H1 (cell line): ENCODE measurements at regions of chr17 and their contacts with region 1.

Region 1: DNA sequence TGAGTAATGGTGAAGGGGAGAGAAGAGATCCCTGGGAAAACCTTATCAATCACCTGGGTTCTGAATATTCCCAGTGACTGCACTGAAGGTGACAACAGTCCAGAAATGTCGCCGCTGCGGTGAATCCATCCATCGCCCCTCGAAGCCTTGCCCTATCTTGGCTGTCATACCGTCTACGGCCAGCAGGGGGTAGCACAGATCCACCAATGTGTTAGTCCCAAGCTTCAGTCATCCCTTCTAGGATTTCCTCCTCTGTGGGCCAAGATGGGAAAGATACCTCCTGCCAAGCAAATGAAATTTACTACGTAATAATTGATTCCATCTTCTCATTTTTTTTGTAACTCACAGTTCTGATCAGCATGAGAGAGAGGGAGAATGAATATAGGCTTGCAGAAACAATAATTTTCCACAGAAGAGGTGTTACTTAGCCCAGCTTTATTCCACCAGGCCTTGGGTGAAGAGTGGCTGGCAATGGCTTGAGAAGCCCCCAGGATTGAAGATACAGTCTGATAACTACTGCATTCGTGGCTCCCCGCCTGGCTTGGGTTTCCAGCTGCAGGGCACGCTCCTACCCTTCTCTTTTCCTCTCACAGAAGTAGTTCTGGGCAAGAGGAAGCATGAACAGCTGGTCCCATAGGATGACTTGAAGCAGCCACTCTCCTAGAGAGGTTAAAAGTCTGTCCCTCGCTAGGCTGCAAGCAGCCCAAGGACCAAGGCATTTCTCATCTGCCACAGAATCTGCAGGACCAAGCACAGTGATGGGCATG is 2.6 kb upstream of the FMNL1 start:
- DNase-seq: peak in 1 of 2 experiments; percentile 99
- H3K4me3 ChIP-seq: no peak overlapping the region
- H3K27ac ChIP-seq: no peak overlapping the region
- H3K4me1 ChIP-seq: peaks cover 0 to 9% (median 3%) of the 10 kb centered on the region in 4 experiments; a peak in 3 of 7 replicates
- H3K27me3 ChIP-seq: peaks cover 15 to 42% (median 35%) of the 10 kb centered on the region in 4 experiments
- CTCF ChIP-seq: peak; percentile 94 to 97 (median 97)
- EP300 ChIP-seq: no peak
- POLR2A ChIP-seq: no peak
- RAD21 ChIP-seq: peak; percentile 96 to 97

Region 2: GRCh38 chr17:45123930-45124796 is 94.9 kb before region 1 on chr17:
- CTCF ChIA-PET with region 1: no interaction called
- POLR2A ChIA-PET with region 1: no interaction called
- DNase-seq: no peak
- H3K4me3 ChIP-seq: no peak overlapping the region
- H3K27ac ChIP-seq: no peak overlapping the region
- H3K4me1 ChIP-seq: peaks cover 0 to 18% (median 10%) of the 10 kb centered on the region in 4 experiments; a peak in 5 of 7 replicates
- H3K27me3 ChIP-seq: no peaks in the 10 kb centered on the region
- CTCF ChIP-seq: no peak
- EP300 ChIP-seq: no peak
- POLR2A ChIP-seq: no peak
- RAD21 ChIP-seq: no peak

Region 3: GRCh38 chr17:45135192-45135977 is 83.7 kb before region 1 on chr17 and contains the start of gene ACBD4:
- CTCF ChIA-PET with region 1: interaction called, 19 read pairs
- POLR2A ChIA-PET with region 1: no interaction called
- DNase-seq: peak; percentile 87 to 99
- H3K4me3 ChIP-seq: peak within 1 kb of the TSS; percentile 26 to 65 (median 58)
- H3K27ac ChIP-seq: no peak within 1 kb of the TSS
- H3K4me1 ChIP-seq: peaks cover 0 to 6% (median 2%) of the 10 kb centered on the region in 4 experiments; a peak in 3 of 7 replicates
- H3K27me3 ChIP-seq: no peaks in the 10 kb centered on the region
- CTCF ChIP-seq: peak; percentile 100
- EP300 ChIP-seq: peak in 1 of 2 experiments; percentile 41; a peak in 1 of 3 replicates
- POLR2A ChIP-seq: 0 out of 3 replicates have a peak, but pooled peaks of 1 of the 2 experiments have one; percentile 43
- RAD21 ChIP-seq: peak; percentile 94 to 95
- total RNA-seq, gene ACBD4: 9.3 and 10.7 TPM in 2 replicates

Region 4: DNA sequence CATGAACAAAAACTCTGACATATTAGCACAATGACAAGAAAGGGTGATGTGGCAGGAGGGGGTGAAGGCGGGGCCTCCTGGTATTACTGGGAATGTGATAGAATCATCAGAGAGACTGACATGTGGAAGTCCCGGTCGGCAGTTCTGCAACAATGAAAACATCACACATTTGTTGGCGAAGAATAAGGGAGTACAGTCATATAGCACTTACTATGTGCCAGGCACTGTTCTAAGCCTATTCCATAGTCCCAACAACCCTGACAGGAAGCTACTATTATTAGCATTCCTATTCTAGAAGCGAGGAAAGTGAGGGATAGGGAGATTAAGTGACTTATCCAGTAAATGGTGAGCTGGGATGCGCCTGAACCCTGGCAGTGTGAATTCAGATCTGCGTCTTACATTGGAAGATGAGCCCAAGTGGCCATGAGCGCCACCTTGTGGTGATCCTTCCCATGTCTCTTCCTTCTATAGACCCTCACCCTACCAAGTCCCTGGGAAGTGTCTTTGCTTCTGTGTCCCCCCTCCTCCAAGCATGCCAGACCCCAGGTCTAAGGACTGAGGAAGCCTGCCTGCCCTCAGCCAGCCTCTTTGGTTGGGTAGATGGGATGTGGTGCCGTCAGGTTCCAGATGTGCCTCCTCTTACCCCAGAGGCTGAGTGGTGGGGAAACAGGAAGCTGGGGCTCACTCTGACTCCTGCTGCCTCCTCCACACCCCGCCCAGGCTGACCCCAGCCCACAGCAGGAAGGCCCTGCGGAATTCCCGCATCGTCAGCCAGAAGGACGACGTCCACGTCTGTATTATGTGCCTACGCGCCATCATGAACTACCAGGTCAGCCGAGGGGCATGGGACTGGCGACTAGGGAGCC is 16.6 kb after region 1 on chr17:
- CTCF ChIA-PET with region 1: interaction called, 362 read pairs
- POLR2A ChIA-PET with region 1: interaction called, 11 read pairs
- DNase-seq: peak; percentile 80 to 92
- H3K4me3 ChIP-seq: 0 out of 8 replicates have a peak overlapping the region, but pooled peaks of 1 of the 4 experiments have one; percentile 12
- H3K27ac ChIP-seq: no peak overlapping the region
- H3K4me1 ChIP-seq: peaks cover 3 to 20% (median 10%) of the 10 kb centered on the region in 4 experiments
- H3K27me3 ChIP-seq: peaks cover 0 to 26% (median 12%) of the 10 kb centered on the region in 4 experiments; a peak in 6 of 7 replicates
- CTCF ChIP-seq: peak; percentile 81 to 95 (median 82)
- EP300 ChIP-seq: no peak
- POLR2A ChIP-seq: no peak
- RAD21 ChIP-seq: peak; percentile 47 to 63; a peak in 3 of 4 replicates

Region 5: DNA sequence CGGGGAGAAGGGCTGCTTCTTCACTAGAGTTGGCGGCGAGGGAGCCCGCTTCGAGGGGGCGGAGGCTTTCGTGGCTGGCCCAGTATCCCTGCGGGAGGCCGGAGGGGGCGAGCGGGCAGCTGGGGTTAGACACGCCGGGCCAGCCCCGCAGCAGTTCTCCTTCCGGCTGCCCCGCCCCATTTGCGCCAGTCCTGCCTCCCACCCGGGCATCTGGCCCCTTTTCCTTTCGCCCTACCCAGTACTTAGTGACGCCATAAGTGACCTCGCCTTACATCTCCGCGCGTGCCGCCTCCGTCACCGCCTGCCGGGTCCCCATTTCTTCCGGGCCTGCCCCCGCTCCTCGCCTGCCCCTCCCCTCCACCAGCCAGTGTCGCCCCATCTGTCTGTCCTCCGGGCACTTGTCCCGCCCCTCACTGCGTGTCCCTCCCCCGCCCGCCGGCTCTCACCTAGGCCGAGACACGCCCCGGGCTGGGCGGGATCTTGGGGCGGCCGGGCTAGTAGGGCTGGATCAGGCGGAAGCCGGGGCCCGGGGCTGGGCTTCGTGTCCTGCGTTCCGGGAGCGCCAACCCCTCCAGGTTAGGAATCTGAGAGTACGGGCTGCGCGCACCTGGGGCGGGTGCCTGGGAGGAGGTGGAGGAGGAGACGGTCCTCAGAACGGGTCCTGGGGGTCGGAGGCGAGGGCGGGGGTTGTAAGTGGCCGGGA is 28.5 kb after region 1 on chr17:
- CTCF ChIA-PET with region 1: interaction called, 362 read pairs
- POLR2A ChIA-PET with region 1: interaction called, 3 read pairs
- DNase-seq: peak; percentile 94 to 97
- H3K4me3 ChIP-seq: peak overlapping the region; percentile 70 to 82 (median 74)
- H3K27ac ChIP-seq: peak overlapping the region; percentile 71
- H3K4me1 ChIP-seq: peaks cover 3 to 15% (median 12%) of the 10 kb centered on the region in 4 experiments
- H3K27me3 ChIP-seq: no peaks in the 10 kb centered on the region; a peak in 2 of 7 replicates
- CTCF ChIP-seq: no peak
- EP300 ChIP-seq: peak in 1 of 2 experiments; percentile 53; a peak in 1 of 3 replicates
- POLR2A ChIP-seq: peak in 1 of 2 experiments; percentile 81; a peak in 2 of 3 replicates
- RAD21 ChIP-seq: no peak

Region 6: GRCh38 chr17:45261577-45262515 is 42.8 kb after region 1 on chr17 and contains the start of gene SPATA32:
- CTCF ChIA-PET with region 1: interaction called, 362 read pairs
- POLR2A ChIA-PET with region 1: interaction called, 4 read pairs
- DNase-seq: peak in 1 of 2 experiments; percentile 83
- H3K4me3 ChIP-seq: peak within 1 kb of the TSS; percentile 52 to 69 (median 60)
- H3K27ac ChIP-seq: 0 out of 2 replicates have a peak within 1 kb of the TSS, but pooled peaks have one; percentile 40
- H3K4me1 ChIP-seq: peaks cover 4 to 14% (median 8%) of the 10 kb centered on the region in 4 experiments
- H3K27me3 ChIP-seq: peaks cover 0 to 5% (median 2%) of the 10 kb centered on the region in 4 experiments; a peak in 3 of 7 replicates
- CTCF ChIP-seq: no peak
- EP300 ChIP-seq: 0 out of 3 replicates have a peak, but pooled peaks of 1 of the 2 experiments have one; percentile 31
- POLR2A ChIP-seq: peak in 1 of 2 experiments; percentile 15; a peak in 1 of 3 replicates
- RAD21 ChIP-seq: no peak
- total RNA-seq, gene SPATA32: not detected in 2 replicates

Region 7: GRCh38 chr17:45277216-45277849 is 58.3 kb after region 1 on chr17:
- CTCF ChIA-PET with region 1: interaction called, 25 read pairs
- POLR2A ChIA-PET with region 1: no interaction called
- DNase-seq: peak; percentile 84 to 89
- H3K4me3 ChIP-seq: no peak overlapping the region
- H3K27ac ChIP-seq: no peak overlapping the region
- H3K4me1 ChIP-seq: peaks cover 0 to 4% (median under 1%) of the 10 kb centered on the region in 4 experiments; a peak in 1 of 7 replicates
- H3K27me3 ChIP-seq: no peaks in the 10 kb centered on the region
- CTCF ChIP-seq: peak; percentile 84 to 90 (median 89)
- EP300 ChIP-seq: no peak
- POLR2A ChIP-seq: no peak
- RAD21 ChIP-seq: peak; percentile 77 to 83

Region 8: GRCh38 chr17:45394913-45395568 is 176.0 kb after region 1 on chr17:
- CTCF ChIA-PET with region 1: interaction called, 12 read pairs
- POLR2A ChIA-PET with region 1: no interaction called
- DNase-seq: peak; percentile 72 to 88
- H3K4me3 ChIP-seq: no peak overlapping the region; a peak in 1 of 8 replicates
- H3K27ac ChIP-seq: no peak overlapping the region
- H3K4me1 ChIP-seq: peaks cover 0 to 4% (median 3%) of the 10 kb centered on the region in 4 experiments; a peak in 4 of 7 replicates
- H3K27me3 ChIP-seq: peaks cover 0 to 2% (median 0%) of the 10 kb centered on the region in 4 experiments; a peak in 2 of 7 replicates
- CTCF ChIP-seq: peak; percentile 82 to 87 (median 87)
- EP300 ChIP-seq: no peak
- POLR2A ChIP-seq: peak in 1 of 2 experiments; percentile 39; a peak in 1 of 3 replicates
- RAD21 ChIP-seq: peak; percentile 87 to 89